ENCODE measurements at regions of chr17 and their contacts with region 1.

Region 1: DNA sequence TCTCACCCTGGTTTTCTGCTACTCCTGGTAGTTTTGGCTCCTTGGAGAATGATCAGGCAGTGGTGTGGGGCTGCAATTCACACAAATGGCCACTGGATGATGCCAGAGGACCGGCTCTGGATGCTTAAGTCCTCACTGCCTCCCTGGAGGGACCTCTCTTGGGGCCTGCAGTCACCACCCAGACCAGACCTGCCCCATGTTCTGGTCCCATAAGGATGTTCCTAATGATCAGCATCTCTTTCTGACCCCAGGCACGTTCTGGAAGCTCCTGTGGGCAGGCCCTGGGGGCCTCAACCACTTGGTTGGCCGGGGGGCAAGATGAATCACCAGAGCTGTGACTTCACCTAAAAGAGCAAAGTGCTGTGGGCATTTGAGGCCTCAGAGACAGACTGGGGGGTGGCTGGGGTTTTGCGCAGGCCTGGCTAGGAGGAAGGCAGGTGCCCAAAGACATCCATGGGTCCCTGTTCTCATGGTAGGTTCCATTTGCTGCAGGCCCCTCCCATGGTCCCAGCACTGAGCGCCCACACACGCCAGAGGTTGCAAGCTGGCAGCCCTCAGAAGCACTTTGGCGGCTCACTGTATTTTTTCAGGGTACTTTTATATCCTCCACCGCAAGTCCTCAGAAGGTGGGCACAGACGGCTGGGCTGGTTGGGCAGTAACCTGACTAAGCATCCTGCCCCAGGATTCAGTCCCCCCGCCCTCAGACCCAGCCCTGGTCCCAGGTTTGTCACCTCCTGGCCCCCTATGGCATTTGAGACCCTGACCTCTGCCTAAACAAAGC is 53.2 kb downstream of the NT5M start:
- DNase-seq: peak; percentile 68 to 83
- H3K4me3 ChIP-seq: no peak overlapping the region
- H3K27ac ChIP-seq: no peak overlapping the region
- H3K4me1 ChIP-seq: peaks cover 0 to 10% (median 1%) of the 10 kb centered on the region in 4 experiments; a peak in 5 of 7 replicates
- H3K27me3 ChIP-seq: no peaks in the 10 kb centered on the region
- CTCF ChIP-seq: peak; percentile 97 to 100 (median 99)
- EP300 ChIP-seq: no peak
- POLR2A ChIP-seq: no peak
- RAD21 ChIP-seq: peak; percentile 100

Region 2: DNA sequence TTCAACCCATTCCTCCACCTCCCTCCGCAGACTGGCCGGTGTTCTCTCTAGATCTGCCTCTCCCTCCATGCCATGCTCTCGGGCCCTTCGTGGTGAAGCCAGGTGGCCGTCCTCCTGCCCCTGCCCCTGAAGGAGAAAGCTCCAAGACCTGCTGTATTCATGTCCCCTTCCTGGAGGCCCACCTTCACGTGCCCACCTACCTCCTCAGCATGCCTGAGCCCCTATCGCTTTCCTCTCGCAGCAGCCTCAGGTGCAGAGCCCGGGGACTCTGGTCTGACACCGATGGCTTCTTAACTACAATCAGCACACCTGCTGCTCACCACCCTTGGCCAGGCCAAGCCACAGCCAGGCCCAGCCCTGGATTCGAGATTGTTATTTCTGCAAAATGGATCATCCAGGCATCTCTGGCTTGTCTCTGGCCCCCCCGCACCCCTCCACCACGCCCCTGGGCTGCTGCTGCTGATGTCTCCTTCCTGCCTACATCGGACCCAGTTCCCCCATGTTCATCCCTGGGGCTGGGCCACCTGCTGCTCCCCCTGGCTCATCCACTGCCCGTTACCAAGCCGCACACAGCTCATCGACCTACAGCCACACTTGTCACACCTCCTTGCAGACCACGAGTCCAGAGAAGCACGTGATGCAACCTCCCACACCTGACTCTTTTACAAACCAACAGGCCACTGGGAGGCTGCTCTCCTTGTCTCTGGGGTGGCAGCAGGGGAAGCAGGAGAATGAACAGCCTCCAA is 351.9 kb before region 1 on chr17:
- CTCF ChIA-PET with region 1: no interaction called
- POLR2A ChIA-PET with region 1: no interaction called
- DNase-seq: no peak
- H3K4me3 ChIP-seq: no peak overlapping the region
- H3K27ac ChIP-seq: no peak overlapping the region
- H3K4me1 ChIP-seq: peaks cover 0 to 4% (median 0%) of the 10 kb centered on the region in 4 experiments; a peak in 1 of 7 replicates
- H3K27me3 ChIP-seq: no peaks in the 10 kb centered on the region
- CTCF ChIP-seq: no peak
- EP300 ChIP-seq: no peak
- POLR2A ChIP-seq: no peak
- RAD21 ChIP-seq: no peak

Region 3: GRCh38 chr17:17258998-17259397 is 97.3 kb before region 1 on chr17:
- CTCF ChIA-PET with region 1: no interaction called
- POLR2A ChIA-PET with region 1: no interaction called
- DNase-seq: no peak
- H3K4me3 ChIP-seq: no peak overlapping the region
- H3K27ac ChIP-seq: no peak overlapping the region
- H3K4me1 ChIP-seq: no peaks in the 10 kb centered on the region
- H3K27me3 ChIP-seq: no peaks in the 10 kb centered on the region
- CTCF ChIP-seq: no peak
- EP300 ChIP-seq: no peak
- POLR2A ChIP-seq: no peak
- RAD21 ChIP-seq: no peak

Region 4: GRCh38 chr17:17387830-17388441 is 31.6 kb after region 1 on chr17:
- CTCF ChIA-PET with region 1: interaction called, 23 read pairs
- POLR2A ChIA-PET with region 1: no interaction called
- DNase-seq: peak; percentile 47 to 70
- H3K4me3 ChIP-seq: no peak overlapping the region
- H3K27ac ChIP-seq: no peak overlapping the region
- H3K4me1 ChIP-seq: no peaks in the 10 kb centered on the region; a peak in 1 of 7 replicates
- H3K27me3 ChIP-seq: no peaks in the 10 kb centered on the region
- CTCF ChIP-seq: peak; percentile 95 to 99 (median 96)
- EP300 ChIP-seq: no peak
- POLR2A ChIP-seq: no peak
- RAD21 ChIP-seq: peak; percentile 50 to 70; a peak in 3 of 4 replicates

Region 5: DNA sequence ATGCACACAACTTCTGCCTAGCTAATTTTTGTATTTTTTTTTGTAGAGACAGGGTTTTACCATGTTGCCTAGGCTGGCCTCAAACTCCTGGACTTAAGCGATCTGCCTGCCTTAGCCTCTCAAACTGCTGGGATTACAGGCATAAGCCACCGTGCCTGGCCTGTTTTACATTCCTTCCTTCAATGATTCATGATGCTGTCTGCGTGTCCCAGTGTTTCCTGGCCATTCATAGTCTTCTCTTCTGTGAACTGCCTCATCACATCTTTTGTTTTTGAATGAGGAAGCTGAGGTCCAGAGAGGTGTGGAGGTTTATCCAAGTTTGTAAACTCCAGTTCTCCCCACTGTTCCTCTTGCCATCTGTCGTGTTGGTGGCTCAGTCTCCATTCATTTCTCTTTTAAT is 56.0 kb after region 1 on chr17:
- CTCF ChIA-PET with region 1: interaction called, 11 read pairs
- POLR2A ChIA-PET with region 1: no interaction called
- DNase-seq: no peak
- H3K4me3 ChIP-seq: no peak overlapping the region
- H3K27ac ChIP-seq: no peak overlapping the region
- H3K4me1 ChIP-seq: no peaks in the 10 kb centered on the region; a peak in 1 of 7 replicates
- H3K27me3 ChIP-seq: no peaks in the 10 kb centered on the region; a peak in 1 of 7 replicates
- CTCF ChIP-seq: no peak
- EP300 ChIP-seq: no peak
- POLR2A ChIP-seq: no peak
- RAD21 ChIP-seq: no peak

Region 6: DNA sequence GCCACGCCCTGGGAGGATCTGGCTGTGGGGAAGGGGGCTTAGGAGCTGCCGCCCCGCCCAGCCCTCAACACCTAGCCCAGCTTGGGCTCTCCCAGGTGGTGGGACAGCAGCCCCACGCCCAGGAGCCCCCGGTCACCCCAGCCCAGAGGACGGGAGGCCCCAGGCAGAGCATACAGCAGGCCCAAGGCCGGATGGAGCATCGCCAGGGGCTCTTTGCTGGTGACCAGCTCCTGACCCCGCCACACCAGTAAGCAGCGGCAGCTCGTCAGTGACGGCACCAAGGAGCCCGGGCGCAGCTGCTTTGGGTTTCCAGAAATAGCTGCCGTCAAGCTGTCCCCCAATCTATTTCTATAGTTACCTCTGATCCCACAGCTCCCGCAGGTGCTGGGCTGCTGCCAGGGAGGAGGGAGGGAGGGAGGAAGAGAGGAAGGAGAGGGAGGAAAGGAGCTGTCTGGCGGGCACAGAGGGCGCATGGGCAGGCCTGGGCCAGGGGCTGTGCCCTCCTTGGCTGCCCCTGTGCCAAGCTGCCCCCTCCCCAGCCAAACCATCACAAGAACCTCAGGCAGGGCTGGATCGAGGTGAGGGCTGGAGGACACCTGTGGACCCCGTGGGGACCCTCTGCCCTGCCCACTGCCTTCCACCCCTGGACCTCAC is 150.6 kb after region 1 on chr17:
- CTCF ChIA-PET with region 1: interaction called, 24 read pairs
- POLR2A ChIA-PET with region 1: no interaction called
- DNase-seq: no peak
- H3K4me3 ChIP-seq: no peak overlapping the region
- H3K27ac ChIP-seq: no peak overlapping the region
- H3K4me1 ChIP-seq: peaks cover 0 to 2% (median 0%) of the 10 kb centered on the region in 4 experiments; a peak in 1 of 7 replicates
- H3K27me3 ChIP-seq: no peaks in the 10 kb centered on the region; a peak in 1 of 7 replicates
- CTCF ChIP-seq: no peak
- EP300 ChIP-seq: no peak
- POLR2A ChIP-seq: no peak
- RAD21 ChIP-seq: no peak

Region 7: DNA sequence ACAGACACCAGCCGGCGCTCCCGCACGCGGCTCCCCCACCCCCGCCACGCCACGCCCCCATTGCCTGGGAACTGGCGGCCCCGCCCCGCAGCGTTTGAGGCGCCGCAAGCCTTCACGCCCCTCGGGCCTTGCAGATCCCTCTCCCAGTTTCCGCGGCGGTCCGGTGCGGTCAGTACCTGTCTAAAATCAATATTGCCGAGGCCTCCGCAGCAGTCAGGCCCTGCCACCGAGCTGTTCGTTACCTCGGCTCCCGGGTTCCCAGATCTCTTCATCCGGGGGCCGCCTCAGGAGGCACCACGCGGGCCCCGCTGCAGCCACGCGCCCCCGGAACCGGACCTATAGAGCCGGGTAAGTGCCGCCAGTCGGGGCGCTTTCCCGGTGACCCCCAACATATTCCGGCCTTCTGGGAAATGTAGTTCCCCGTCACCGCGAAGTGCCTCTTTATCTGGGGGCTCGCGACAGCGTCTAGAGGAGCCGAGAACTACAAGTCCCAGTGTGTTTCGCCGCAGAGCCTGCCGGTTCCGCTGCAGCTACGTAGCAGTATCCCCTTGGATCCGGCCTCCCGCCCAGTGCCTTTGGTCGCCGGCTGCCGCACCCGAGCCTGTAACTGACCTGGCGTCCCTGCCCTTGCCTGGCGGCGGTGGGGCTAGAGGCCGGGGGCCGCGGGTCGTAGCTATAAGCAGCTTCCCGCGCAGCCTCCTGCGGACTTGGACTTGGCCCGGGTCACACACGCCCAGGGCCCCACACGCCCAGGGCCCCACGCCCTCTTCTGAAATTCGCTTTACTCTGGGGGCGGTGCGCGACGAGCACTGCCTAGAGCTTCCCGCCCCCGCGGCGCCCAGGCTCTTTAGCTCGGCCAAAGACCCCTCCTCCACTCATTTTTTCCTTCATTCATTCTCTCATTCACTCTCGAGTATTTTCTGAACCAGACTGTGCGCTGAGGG is 235.3 kb after region 1 on chr17 and contains the start of gene PEMT:
- CTCF ChIA-PET with region 1: interaction called, 18 read pairs
- POLR2A ChIA-PET with region 1: no interaction called
- DNase-seq: peak; percentile 90 to 93
- H3K4me3 ChIP-seq: peak within 1 kb of the TSS; percentile 69 to 87 (median 86)
- H3K27ac ChIP-seq: peak within 1 kb of the TSS; percentile 60; the same call in 1 of the 2 replicates
- H3K4me1 ChIP-seq: peaks cover 0 to 10% (median 2%) of the 10 kb centered on the region in 4 experiments; a peak in 4 of 7 replicates
- H3K27me3 ChIP-seq: no peaks in the 10 kb centered on the region
- CTCF ChIP-seq: no peak
- EP300 ChIP-seq: peak in 1 of 2 experiments; percentile 9; a peak in 1 of 3 replicates
- POLR2A ChIP-seq: peak; percentile 4 to 78; a peak in 2 of 3 replicates
- RAD21 ChIP-seq: no peak
- total RNA-seq, gene PEMT: 40.1 and 42.0 TPM in 2 replicates

Measured in H1 (cell line).